Right ventricle myocardium superior (tissue), 1 donor: ENCODE measurements at regions of chr1 and their contacts with region 1.

Region 1: GRCh38 chr1:3620708-3621107 is 4.1 kb upstream of the TPRG1L start:
- DNase-seq: no peak
- ATAC-seq: no peak

Region 2: DNA sequence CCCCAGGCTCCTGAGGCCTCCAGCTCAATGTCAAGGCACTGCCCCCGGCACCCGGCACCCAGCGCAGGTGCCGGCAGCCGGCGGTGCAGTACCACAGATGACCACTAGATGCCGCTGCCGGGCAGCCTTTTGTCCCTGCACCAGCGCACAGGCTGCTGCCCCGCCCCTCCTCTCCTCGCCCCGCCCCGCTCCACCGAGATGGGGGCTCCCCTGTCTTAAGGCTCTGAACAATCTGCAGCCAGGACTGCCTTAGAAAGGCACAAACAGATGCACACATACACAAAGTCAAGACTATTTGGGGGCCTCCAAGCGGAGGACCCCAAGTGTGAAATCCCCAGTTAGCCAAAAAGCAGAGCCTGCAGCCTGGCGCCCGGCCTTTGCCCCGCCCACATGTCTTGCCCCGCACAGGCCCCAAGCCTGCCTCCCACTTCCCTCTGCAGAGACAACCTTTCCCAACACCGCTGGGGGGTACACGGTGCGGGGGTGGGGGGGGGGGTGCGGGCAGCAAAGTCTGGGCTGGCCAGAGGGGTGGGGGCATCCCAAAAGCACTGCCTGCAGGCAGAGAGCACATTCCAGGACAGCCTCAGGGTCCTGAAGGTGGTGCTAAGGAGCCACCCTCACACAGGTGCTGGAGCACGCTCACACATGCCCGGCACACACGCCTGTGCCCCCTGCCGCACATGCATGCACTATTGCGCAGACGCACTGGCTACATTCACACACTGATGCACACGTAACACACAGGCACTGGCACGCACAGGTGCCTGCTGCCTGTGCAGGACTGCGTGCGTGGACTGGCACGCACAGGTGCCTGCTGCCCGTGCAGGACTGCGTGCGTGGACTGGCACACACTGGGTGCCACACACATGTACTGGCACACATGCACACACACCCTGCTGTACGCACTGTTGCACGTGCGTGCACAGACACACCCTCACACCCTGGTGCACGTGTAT is 129.1 kb before region 1 on chr1:
- intact Hi-C with region 1: loop called (anchors 1 kb)
- DNase-seq: peak; percentile 89
- ATAC-seq: peak; percentile 90

Region 3: DNA sequence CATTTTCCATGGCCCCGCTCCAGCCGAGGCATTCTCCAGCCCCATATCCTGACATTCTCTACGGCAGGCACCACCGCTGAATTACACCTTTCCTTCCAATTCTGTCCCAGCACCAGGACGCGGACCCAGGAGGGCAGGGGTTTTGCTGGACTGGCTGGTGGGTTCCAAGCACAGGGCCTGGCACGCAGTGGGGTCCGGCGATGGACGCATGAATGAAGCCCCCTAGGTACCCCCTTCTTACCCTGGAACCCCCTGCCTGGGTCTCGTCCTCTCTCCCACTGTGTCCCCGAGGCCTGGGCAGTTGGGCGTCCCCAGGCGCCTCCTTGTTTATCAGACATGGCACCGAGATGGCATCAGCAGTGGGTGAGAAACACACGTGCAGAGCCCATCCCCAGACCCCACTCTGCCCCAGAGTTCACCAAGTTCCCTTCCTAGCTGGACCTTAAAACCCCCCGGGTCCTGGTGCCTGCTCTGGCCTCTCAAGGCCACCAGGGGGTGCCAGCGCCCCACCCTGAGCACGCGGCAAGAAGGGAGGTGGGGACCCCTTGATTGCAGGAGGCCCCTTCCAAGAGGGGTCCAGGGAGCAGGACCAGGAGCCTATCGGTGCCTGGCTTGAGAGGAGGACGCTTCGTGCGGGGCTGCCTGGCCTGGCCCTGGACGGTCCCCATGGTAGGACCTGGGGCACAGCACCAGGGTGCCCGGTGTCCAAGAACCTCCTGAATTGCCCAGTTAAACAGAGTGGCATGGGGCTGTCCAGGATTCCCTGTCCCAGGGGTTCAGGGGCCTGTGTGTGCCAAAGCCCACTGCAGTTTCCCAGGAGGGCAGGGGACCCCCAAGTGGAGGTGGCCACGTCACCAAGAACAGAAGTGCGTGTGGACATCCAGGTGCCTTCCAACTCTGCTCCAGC is 55.5 kb before region 1 on chr1:
- intact Hi-C with region 1: loop called (anchors 2 kb)
- DNase-seq: no peak
- ATAC-seq: peak; percentile 57